ENCODE measurements at regions of chr5 and their contacts with region 1.

Region 1: DNA sequence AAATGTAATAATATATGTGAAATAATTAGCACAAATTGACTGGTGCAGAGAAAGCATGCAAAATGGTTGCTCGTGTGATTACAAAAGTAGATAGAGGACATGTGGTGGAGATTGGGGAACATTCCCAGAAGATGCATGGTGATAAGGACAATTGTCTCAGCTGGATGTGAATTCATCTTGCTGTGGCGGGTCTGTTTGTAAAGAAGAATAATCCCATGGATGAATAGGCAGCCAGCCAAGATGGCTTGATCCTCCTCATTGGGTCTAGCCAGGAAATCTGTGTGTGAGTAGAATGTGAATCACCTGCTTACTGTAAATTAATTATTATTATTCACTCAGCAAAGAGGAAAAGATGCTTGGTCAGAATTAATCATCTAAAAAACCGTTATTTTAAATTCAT is 12.6 kb upstream of the DPYSL3 start:
- DNase-seq: no peak
- H3K4me3 ChIP-seq: no peak overlapping the region
- H3K27ac ChIP-seq: no peak overlapping the region
- H3K4me1 ChIP-seq: no peaks in the 10 kb centered on the region
- H3K27me3 ChIP-seq: no peaks in the 10 kb centered on the region
- CTCF ChIP-seq: no peak
- POLR2A ChIP-seq: no peak

Region 2: DNA sequence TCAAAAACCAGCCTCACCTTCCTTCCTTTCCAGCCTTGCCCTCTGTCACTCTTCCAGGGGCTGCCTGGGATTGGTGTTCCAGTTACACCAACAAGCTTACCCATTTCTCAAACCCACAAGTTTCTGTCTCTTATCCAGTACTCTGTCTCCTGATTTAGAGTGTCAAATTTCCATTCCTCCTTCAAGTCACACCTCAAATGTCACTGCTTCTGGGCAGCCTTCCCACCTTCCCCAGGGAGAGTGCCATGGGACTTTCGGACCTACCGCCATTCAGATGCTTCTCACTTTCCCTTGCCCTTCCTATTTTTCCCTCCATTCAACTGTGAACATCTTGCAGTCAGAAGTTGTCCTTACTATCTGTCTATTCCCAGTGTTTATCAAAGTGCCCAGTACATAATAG is 1647.7 kb before region 1 on chr5:
- intact Hi-C with region 1: no loop called
- DNase-seq: no peak
- H3K4me3 ChIP-seq: no peak overlapping the region
- H3K27ac ChIP-seq: no peak overlapping the region
- H3K4me1 ChIP-seq: no peaks in the 10 kb centered on the region
- H3K27me3 ChIP-seq: no peaks in the 10 kb centered on the region
- CTCF ChIP-seq: no peak
- POLR2A ChIP-seq: no peak

Region 3: DNA sequence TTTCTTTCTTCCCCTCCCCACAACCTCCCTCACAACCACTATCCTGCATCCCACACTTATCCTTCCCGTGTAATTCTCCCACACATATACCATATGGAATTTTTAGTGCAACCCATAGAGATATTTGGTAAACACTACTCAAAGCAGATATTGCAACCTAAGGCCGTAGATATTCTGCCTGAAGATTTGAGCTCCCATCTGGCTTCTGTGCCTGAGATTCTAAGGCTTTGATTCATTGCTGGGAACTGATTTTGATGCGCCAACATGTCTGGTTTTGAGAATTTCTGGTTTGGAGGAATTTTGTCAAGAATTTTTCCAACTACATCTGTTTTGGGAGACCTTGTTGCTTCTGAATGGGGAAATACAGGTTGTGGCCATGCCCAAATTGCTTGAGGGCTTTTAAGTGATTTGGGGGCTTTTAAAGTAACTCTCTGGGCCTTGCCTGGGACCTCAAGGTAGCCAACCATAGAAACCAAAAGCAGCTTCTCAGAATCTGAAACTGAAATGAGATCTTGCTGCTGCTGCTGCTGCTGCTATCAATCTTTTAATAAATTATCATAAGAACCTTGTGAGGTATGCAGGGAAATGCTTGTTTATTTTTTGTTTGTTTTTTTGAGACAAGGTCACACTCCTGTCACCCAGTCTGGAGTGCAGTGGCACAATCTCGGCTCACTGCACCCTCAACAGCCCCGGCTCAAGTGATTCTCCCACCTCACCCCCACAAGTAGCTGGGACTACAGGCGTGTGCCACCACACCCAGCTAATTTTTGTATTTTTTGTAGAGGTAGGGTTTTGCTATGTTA is 1453.3 kb before region 1 on chr5:
- intact Hi-C with region 1: loop called (anchors 5 kb)
- DNase-seq: no peak
- H3K4me3 ChIP-seq: no peak overlapping the region
- H3K27ac ChIP-seq: no peak overlapping the region
- H3K4me1 ChIP-seq: no peaks in the 10 kb centered on the region
- H3K27me3 ChIP-seq: no peaks in the 10 kb centered on the region
- CTCF ChIP-seq: no peak
- POLR2A ChIP-seq: no peak

Region 4: GRCh38 chr5:146662229-146662628 is 860.2 kb before region 1 on chr5:
- intact Hi-C with region 1: no loop called
- DNase-seq: no peak
- H3K4me3 ChIP-seq: no peak overlapping the region
- H3K27ac ChIP-seq: no peak overlapping the region
- H3K4me1 ChIP-seq: no peaks in the 10 kb centered on the region
- H3K27me3 ChIP-seq: no peaks in the 10 kb centered on the region
- CTCF ChIP-seq: peak in 2 of 3 donors; percentile 26 to 34
- POLR2A ChIP-seq: no peak

Measured in breast epithelium (tissue), 4 donors.